ENCODE measurements at regions of chrX and their contacts with region 1.

Region 1: GRCh38 chrX:153875391-153876111 is 10.4 kb downstream of the L1CAM start:
- DNase-seq: no peak
- H3K4me3 ChIP-seq: no peak overlapping the region
- H3K27ac ChIP-seq: no peak overlapping the region
- H3K4me1 ChIP-seq: no peaks in the 10 kb centered on the region
- H3K27me3 ChIP-seq: peaks cover 0 to 40% (median 2%) of the 10 kb centered on the region in 4 donors
- CTCF ChIP-seq: no peak
- POLR2A ChIP-seq: no peak

Region 2: GRCh38 chrX:153818571-153819383 is 56.8 kb before region 1 on chrX:
- intact Hi-C with region 1: loop called (anchors 10 kb)
- DNase-seq: no peak
- H3K4me3 ChIP-seq: peak overlapping the region; percentile 24 to 60 (median 40)
- H3K27ac ChIP-seq: peak overlapping the region in 1 of 4 donors; percentile 33
- H3K4me1 ChIP-seq: peaks cover 0 to 14% (median 0%) of the 10 kb centered on the region in 3 donors
- H3K27me3 ChIP-seq: peaks cover 0 to 8% (median 0%) of the 10 kb centered on the region in 4 donors
- CTCF ChIP-seq: no peak
- POLR2A ChIP-seq: no peak

Region 3: DNA sequence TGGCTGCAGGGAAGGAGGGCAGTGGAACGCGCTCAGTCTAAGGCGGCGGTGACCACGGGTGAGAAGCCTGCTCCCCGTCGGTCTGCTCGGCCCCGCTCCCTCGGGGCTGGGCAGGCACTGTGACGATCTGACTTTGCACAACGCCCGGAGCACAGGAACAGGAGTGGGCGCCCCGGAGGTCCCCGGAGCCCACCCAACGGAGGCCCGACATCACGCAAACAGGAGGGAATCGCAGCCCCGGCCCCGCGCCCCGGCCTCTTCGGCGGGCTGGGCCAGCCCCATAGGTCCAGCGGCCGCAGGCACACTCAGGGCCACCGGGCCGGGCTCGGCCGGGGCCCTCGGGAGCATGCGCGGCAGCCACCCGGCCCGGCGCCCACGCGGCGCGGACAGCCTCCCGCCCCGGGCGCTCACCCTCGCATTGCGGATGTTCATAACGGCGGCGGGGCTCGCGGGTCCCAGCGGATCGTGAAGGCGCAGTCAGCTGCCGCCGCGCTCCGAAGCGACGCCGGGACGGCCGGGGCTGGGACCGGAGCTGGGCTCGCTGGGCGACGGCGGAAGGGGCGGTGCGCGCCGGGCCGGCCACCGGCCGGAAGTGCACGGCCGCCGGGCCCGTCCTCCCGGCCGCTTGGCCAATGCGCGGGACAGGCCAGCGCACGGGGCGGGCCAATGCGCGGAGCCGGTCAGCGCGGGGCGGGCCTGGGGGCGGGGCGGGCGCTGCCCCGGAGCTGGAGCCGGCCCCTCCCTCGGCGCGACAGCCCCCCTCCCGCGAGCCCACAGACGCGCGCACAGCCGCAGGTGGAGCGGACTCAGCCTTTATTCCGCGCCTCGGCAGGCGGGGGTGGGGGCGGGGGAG is 59.1 kb after region 1 on chrX and contains the start of gene NAA10:
- intact Hi-C with region 1: no loop called
- DNase-seq: no peak
- H3K4me3 ChIP-seq: peak within 1 kb of the TSS; percentile 62 to 78 (median 70)
- H3K27ac ChIP-seq: peak within 1 kb of the TSS; percentile 67 to 85 (median 74)
- H3K4me1 ChIP-seq: peaks cover 0 to 30% (median 8%) of the 10 kb centered on the region in 3 donors
- H3K27me3 ChIP-seq: no peaks in the 10 kb centered on the region
- CTCF ChIP-seq: no peak
- POLR2A ChIP-seq: peak in 1 of 4 donors; percentile 48
- total RNA-seq, gene NAA10: 42.5 to 92.5 (median 87.6) TPM

Region 4: GRCh38 chrX:154819771-154820341 is 944.3 kb after region 1 on chrX:
- intact Hi-C with region 1: no loop called
- DNase-seq: no peak
- H3K4me3 ChIP-seq: no peak overlapping the region
- H3K27ac ChIP-seq: no peak overlapping the region
- H3K4me1 ChIP-seq: no peaks in the 10 kb centered on the region
- H3K27me3 ChIP-seq: no peaks in the 10 kb centered on the region
- CTCF ChIP-seq: no peak
- POLR2A ChIP-seq: no peak

Measured in esophagus squamous epithelium (tissue), 5 donors.